Activated CD4-positive, alpha-beta memory T cell treated with anti-CD3 and anti-CD28 coated beads for 36 hours (primary cell): ENCODE measurements at regions of chr13 and their contacts with region 1.

Region 1: GRCh38 chr13:97432917-97433726 is 847 bp upstream of the RAP2A start:
- DNase-seq: peak; percentile 99
- H3K4me3 Mint-ChIP-seq: peak overlapping the region; percentile 95
- H3K27ac Mint-ChIP-seq: peak overlapping the region; percentile 99
- H3K4me1 Mint-ChIP-seq: peaks cover 22% of the 10 kb centered on the region
- H3K27me3 Mint-ChIP-seq: peaks cover 3% of the 10 kb centered on the region

Region 2: GRCh38 chr13:97109841-97110492 is 323.2 kb before region 1 on chr13:
- CTCF ChIA-PET with region 1: interaction called, 10 read pairs
- POLR2A ChIA-PET with region 1: no interaction called
- intact Hi-C with region 1: no loop called
- DNase-seq: peak; percentile 86
- H3K4me3 Mint-ChIP-seq: no peak overlapping the region
- H3K27ac Mint-ChIP-seq: no peak overlapping the region
- H3K4me1 Mint-ChIP-seq: peaks cover 13% of the 10 kb centered on the region
- H3K27me3 Mint-ChIP-seq: peaks cover 14% of the 10 kb centered on the region

Region 3: GRCh38 chr13:97257800-97258799 is 175.0 kb before region 1 on chr13:
- CTCF ChIA-PET with region 1: no interaction called
- POLR2A ChIA-PET with region 1: no interaction called
- intact Hi-C with region 1: loop called (anchors 10 kb)
- DNase-seq: peak; percentile 45
- H3K4me3 Mint-ChIP-seq: peak overlapping the region; percentile 40
- H3K27ac Mint-ChIP-seq: peak overlapping the region; percentile 76
- H3K4me1 Mint-ChIP-seq: peaks cover 80% of the 10 kb centered on the region
- H3K27me3 Mint-ChIP-seq: no peaks in the 10 kb centered on the region

Region 4: GRCh38 chr13:97411984-97412383 is 21.1 kb before region 1 on chr13:
- CTCF ChIA-PET with region 1: no interaction called
- POLR2A ChIA-PET with region 1: no interaction called
- intact Hi-C with region 1: no loop called
- DNase-seq: no peak
- H3K4me3 Mint-ChIP-seq: no peak overlapping the region
- H3K27ac Mint-ChIP-seq: no peak overlapping the region
- H3K4me1 Mint-ChIP-seq: no peaks in the 10 kb centered on the region
- H3K27me3 Mint-ChIP-seq: peaks cover 13% of the 10 kb centered on the region

Region 5: DNA sequence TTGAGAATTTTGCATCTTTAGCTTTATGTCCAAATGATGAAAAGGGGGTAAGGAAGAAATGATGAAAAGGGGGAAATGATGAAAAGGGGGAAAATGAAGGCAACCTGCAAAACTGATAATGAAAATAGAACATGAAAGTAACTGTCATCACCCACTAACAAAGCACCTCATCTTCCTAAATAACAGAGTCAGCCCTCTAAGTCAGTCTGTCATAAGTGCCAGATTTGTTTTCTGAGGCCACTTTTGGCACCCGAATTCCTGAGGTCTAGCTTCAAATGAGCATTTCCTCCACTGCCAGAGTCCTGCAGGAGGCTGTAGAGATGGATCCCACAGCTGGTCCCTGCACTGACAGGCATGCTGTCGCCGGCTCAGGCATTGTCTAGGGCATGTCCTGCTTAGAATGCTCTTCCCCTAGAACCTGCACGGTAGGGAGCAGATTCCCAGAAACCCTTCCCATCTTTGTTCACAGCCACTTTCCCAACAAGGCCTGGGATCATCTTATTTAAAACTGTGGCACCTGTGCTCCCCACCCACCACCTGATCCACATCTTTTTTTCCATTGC is 26.2 kb after region 1 on chr13:
- CTCF ChIA-PET with region 1: no interaction called
- POLR2A ChIA-PET with region 1: interaction called, 3 read pairs
- intact Hi-C with region 1: loop called (anchors 1 kb)
- DNase-seq: no peak
- H3K4me3 Mint-ChIP-seq: no peak overlapping the region
- H3K27ac Mint-ChIP-seq: peak overlapping the region; percentile 2
- H3K4me1 Mint-ChIP-seq: peaks cover 28% of the 10 kb centered on the region
- H3K27me3 Mint-ChIP-seq: no peaks in the 10 kb centered on the region

Region 6: GRCh38 chr13:97975848-97976609 is 542.9 kb after region 1 on chr13:
- CTCF ChIA-PET with region 1: no interaction called
- POLR2A ChIA-PET with region 1: no interaction called
- intact Hi-C with region 1: loop called (anchors 1 kb)
- DNase-seq: peak; percentile 91
- H3K4me3 Mint-ChIP-seq: peak overlapping the region; percentile 86
- H3K27ac Mint-ChIP-seq: peak overlapping the region; percentile 95
- H3K4me1 Mint-ChIP-seq: peaks cover 31% of the 10 kb centered on the region
- H3K27me3 Mint-ChIP-seq: no peaks in the 10 kb centered on the region